GM13977 (cell line): ENCODE measurements at regions of chr16 and their contacts with region 1.

Region 1: DNA sequence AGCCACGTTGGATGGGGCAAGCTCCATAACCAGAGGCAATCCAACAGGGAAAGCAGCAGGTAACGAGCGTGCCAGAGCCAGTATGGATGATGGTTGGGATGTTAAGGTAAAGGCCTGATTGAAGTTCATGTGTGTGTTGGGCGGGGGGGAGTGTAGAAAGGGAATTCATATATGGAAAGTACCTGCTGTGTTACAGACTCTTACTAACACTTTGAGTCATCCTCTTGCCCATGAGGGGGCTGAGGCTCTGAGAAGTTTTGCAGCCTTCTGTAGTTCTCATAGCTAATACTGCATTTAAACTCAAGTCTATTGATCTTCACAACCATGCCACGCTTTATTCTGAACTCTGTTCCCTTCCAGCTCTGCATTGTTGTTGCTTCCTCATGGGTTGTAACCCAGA is 28.5 kb downstream of the SYCE1L start:
- DNase-seq: no peak
- CTCF ChIP-seq: no peak

Region 2: GRCh38 chr16:77585379-77586251 is 357.9 kb after region 1 on chr16:
- in situ Hi-C with region 1: loop called (anchors 5 kb)
- DNase-seq: no peak
- CTCF ChIP-seq: no peak